MCF 10A (cell line): ENCODE measurements at regions of chr10 and their contacts with region 1.

Region 1: GRCh38 chr10:76036111-76036940 is 604.9 kb downstream of the LRMDA start:
- DNase-seq: peak; percentile 63
- H3K4me3 Mint-ChIP-seq: no peak overlapping the region
- H3K27ac Mint-ChIP-seq: no peak overlapping the region
- H3K4me1 Mint-ChIP-seq: peaks cover 6% of the 10 kb centered on the region
- H3K27me3 Mint-ChIP-seq: no peaks in the 10 kb centered on the region
- CTCF ChIP-seq: peak; percentile 94

Region 2: DNA sequence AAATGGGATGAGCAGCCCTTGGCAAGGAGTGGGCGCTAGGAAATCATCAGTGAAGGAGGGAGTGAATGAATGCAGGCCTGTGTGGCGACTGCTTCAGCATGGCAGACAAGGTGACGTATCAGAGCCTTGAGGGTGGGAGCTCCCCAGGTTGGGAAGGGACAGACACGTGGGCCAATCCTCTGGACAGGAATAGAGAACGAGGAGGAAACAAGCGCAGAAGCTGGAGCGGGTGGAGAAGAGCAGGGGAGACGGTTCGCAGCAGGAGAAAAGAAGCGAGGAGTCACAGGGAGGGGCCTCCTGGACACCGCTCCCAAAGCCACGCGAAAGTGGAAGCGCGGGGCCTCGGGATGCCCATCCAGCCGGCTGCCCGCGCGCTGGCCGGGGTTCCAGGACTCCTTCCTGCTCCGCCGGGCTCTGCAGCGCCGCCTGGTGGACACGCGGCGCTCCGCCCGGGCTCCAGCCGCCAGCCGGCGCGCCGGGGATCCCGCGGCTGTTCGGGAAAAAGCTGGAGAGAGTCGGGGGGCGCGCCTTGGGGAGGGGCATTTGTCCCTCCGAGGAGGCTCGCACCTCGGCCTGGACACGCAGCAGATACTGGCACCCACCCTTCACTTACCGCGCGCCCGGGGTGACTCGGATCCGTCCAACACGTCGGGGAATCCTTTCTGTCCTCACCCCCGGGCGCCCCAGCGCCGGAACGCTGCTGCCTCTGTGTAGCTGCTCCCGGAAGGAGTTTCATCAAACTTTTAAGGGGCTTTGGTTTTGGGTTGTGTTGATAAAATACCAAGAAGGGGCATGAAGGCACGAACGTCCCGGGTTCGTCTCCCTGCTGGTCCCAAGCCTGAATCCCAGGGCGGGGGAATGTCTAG is 641.0 kb before region 1 on chr10:
- CTCF ChIA-PET with region 1: interaction called, 35 read pairs
- POLR2A ChIA-PET with region 1: no interaction called
- intact Hi-C with region 1: no loop called
- DNase-seq: no peak
- H3K4me3 Mint-ChIP-seq: no peak overlapping the region
- H3K27ac Mint-ChIP-seq: no peak overlapping the region
- H3K4me1 Mint-ChIP-seq: peaks cover 4% of the 10 kb centered on the region
- H3K27me3 Mint-ChIP-seq: no peaks in the 10 kb centered on the region
- CTCF ChIP-seq: peak; percentile 78

Region 3: DNA sequence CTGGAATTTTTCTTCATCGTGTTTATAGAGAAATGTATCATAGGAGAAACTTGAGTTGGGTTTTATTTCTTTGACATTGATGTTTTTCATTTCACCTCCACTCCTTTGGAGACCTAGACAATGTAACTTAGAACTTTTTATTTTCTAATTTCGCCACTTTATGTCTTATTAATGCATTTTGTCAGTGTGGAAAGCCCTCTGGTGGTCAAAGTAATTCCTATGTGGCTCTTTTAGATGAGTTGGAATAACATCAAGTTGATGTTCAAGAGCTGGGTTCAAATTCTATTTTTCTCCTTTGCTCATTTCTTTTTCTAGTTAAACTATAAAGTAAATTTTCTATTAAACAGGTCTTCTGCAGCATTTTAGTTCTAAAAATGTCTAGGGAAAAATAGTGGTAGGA is 126.3 kb before region 1 on chr10:
- CTCF ChIA-PET with region 1: interaction called, 6 read pairs
- POLR2A ChIA-PET with region 1: no interaction called
- intact Hi-C with region 1: loop called (anchors 2 kb)
- DNase-seq: peak; percentile 36
- H3K4me3 Mint-ChIP-seq: no peak overlapping the region
- H3K27ac Mint-ChIP-seq: no peak overlapping the region
- H3K4me1 Mint-ChIP-seq: peaks cover 4% of the 10 kb centered on the region
- H3K27me3 Mint-ChIP-seq: peaks cover 10% of the 10 kb centered on the region
- CTCF ChIP-seq: peak; percentile 40

Region 4: GRCh38 chr10:76051007-76051936 is 14.9 kb after region 1 on chr10:
- CTCF ChIA-PET with region 1: interaction called, 19 read pairs
- POLR2A ChIA-PET with region 1: no interaction called
- intact Hi-C with region 1: no loop called
- DNase-seq: no peak
- H3K4me3 Mint-ChIP-seq: no peak overlapping the region
- H3K27ac Mint-ChIP-seq: no peak overlapping the region
- H3K4me1 Mint-ChIP-seq: no peaks in the 10 kb centered on the region
- H3K27me3 Mint-ChIP-seq: no peaks in the 10 kb centered on the region
- CTCF ChIP-seq: no peak

Region 5: GRCh38 chr10:76303682-76304316 is 267.5 kb after region 1 on chr10:
- CTCF ChIA-PET with region 1: interaction called, 4 read pairs
- POLR2A ChIA-PET with region 1: no interaction called
- intact Hi-C with region 1: loop called (anchors 2 kb)
- DNase-seq: peak; percentile 73
- H3K4me3 Mint-ChIP-seq: no peak overlapping the region
- H3K27ac Mint-ChIP-seq: no peak overlapping the region
- H3K4me1 Mint-ChIP-seq: no peaks in the 10 kb centered on the region
- H3K27me3 Mint-ChIP-seq: no peaks in the 10 kb centered on the region
- CTCF ChIP-seq: peak; percentile 46

Region 6: GRCh38 chr10:76318171-76318570 is 281.8 kb after region 1 on chr10:
- CTCF ChIA-PET with region 1: no interaction called
- POLR2A ChIA-PET with region 1: no interaction called
- intact Hi-C with region 1: no loop called
- DNase-seq: no peak
- H3K4me3 Mint-ChIP-seq: no peak overlapping the region
- H3K27ac Mint-ChIP-seq: no peak overlapping the region
- H3K4me1 Mint-ChIP-seq: no peaks in the 10 kb centered on the region
- H3K27me3 Mint-ChIP-seq: no peaks in the 10 kb centered on the region
- CTCF ChIP-seq: no peak

Region 7: DNA sequence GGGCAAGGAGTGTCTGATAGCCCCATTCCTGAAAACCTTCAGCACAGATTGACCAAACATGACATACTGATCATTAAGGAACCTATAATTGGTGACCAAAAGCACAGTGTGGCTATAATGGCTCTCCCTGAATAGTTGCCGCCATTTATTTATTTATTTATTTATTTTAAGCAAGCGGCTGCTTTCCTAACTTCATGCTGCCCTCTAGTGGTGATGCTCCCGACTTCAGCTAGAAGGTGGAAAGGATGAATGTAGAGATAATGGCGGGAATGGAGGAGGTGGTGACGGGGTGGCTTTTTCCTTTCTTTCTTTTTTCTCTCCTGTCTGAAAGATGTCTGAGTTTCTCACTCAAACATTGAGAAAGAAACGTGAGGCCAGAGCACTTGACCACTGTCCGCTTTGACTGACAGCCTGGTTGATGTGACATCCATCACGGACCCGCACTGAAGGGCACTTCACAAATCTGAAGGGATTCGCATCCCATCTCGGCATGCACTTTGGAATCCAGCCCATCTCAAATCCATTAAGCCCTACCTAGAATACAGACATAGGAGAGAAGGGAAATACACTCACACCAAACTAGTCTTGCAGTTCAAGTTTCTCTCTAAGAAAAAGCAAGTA is 511.1 kb after region 1 on chr10:
- CTCF ChIA-PET with region 1: interaction called, 8 read pairs
- POLR2A ChIA-PET with region 1: no interaction called
- intact Hi-C with region 1: loop called (anchors 1 kb)
- DNase-seq: peak; percentile 84
- H3K4me3 Mint-ChIP-seq: no peak overlapping the region
- H3K27ac Mint-ChIP-seq: no peak overlapping the region
- H3K4me1 Mint-ChIP-seq: no peaks in the 10 kb centered on the region
- H3K27me3 Mint-ChIP-seq: no peaks in the 10 kb centered on the region
- CTCF ChIP-seq: peak; percentile 74